Head of caudate nucleus (tissue), 42 donors: ENCODE measurements at regions of chr3 and their contacts with region 1.

Region 1: DNA sequence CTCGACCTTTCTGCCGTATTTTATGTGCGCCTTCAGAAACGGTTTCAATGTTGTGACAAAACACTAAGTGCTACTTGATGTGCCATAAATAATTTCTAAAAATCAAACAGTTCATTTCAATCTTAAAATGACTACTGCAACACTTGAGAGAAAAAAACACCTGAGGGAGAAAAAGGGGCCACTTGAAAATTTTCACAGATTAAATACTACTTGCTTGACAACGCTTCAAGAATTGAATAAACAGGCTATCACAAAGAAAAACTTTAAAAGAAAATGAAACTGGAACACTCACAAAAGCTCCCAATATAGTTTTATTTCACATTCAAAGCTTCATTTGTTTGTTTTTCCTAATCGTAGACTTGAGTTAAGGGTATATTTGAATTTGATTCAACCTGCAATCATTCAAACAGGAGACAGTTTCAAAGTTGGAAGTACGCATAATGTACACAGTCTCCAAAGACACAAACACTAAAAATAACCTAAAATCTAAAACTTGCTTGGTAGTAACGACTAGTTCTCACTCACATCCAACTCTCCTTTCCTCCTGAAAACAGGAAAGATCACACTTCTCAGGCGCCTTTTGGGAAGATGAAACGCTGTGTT is 380.7 kb downstream of the ERC2 start:
- DNase-seq: no peak

Region 2: GRCh38 chr3:55951388-55951787 is 136.2 kb before region 1 on chr3:
- intact Hi-C with region 1: no loop called
- DNase-seq: no peak

Region 3: GRCh38 chr3:56076746-56077145 is 10.8 kb before region 1 on chr3:
- intact Hi-C with region 1: loop called (anchors 2 kb)
- DNase-seq: no peak